Right ventricle myocardium superior (tissue), 1 donor: ENCODE measurements at regions of chr3 and their contacts with region 1.

Region 1: DNA sequence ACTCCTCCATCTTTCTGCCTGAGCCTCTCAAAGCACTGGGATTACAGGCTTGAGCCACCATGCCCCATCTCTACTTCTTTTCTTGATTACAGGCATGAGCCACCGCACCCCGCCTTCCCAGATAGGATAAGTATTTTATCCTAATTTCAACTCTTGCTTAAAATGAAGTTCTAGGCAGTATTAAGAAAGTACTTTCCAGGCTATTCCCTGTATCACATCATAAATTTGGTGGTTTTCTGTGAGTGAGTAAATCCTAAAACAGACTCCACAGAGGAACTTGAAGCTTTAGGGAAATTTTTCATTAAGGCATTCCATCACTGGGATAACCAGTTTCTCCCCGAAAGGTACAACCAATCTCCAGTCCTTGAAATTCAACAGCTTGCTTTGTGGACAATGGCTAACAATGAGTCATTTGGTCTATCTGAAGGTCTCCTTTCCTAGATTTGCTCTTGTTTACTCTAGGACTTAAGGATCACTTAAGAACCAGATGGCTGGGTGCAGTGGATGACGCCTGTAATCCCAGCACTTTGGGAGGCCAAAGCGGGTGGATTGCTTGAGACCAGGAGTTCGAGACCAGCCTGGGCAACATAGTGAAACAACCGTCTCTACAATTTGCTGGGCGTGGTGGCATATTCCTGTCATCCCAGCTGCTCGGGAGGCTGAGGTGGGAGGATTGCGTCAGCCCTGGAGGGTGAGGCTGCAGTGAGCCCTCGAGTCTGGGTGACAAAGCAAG is 49.7 kb upstream of the SKIL start:
- DNase-seq: no peak
- ATAC-seq: no peak

Region 2: DNA sequence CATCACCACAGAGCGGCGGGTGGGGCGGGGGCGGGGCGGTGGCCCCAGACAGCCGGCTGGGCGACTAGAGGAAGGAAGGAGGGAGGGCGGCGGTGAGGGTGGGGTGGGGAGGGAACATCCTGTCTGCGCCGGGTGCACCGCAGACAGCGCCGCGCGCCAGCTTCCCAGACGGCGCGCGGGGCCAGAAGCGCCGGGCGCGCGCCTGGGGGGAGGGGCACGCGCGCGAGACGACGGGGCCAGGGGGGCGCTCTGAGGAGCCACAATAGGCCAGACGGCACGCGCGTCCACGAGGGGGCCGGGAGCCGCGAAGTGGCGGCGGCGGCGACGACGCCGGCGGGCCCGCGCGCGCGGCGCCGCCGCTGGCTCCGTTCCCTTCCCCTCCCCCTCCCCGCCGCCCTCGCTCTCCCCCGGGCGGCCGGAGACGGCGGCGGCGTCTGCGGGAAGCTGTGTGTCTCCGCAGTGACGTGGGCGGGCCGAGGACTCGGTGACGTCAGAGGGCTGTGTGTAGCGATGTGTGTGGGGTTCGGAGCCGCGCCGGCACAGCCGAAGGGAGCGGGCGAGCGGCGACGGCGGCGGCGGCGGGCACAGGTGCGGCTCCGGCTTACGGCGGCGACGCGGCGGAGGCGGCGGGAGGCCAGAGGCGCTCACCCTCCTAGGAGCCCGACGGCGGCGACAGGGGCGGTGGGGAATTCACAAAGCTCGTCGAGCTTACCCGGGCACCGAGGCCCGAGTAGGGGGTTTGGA is 49.5 kb after region 1 on chr3 and contains the start of gene SKIL:
- intact Hi-C with region 1: loop called (anchors 5 kb)
- DNase-seq: peak; percentile 99
- ATAC-seq: peak; percentile 85
- total RNA-seq, gene SKIL: 14.7 TPM